Left ventricle myocardium superior (tissue), 1 donor: ENCODE measurements at regions of chr18 and their contacts with region 1.

Region 1: GRCh38 chr18:75884728-75885127 is 457.2 kb upstream of the SMIM21 start:
- DNase-seq: peak; percentile 36
- ATAC-seq: no peak

Region 2: GRCh38 chr18:75478996-75479880 is 405.5 kb before region 1 on chr18:
- intact Hi-C with region 1: no loop called
- DNase-seq: no peak
- ATAC-seq: peak; percentile 75

Region 3: DNA sequence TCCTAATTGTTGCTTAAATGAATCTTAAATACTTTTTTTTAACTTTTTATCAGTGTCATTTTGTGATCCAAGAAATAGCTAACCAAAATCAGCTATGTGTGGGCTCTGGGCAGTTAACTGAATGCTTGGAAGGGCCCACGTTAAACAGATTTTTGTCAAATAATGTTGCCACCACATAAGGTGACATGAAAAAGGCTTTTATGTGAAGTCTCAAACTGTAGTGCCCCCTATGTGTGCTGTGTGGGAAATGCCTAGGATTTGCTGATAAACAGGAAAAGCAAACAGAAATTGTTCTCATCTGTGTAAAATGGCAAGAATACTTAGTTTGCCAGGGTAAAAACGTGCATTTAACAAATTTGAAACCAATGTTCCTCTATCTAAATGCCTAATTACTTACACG is 368.2 kb after region 1 on chr18:
- intact Hi-C with region 1: loop called (anchors 10 kb)
- DNase-seq: no peak
- ATAC-seq: no peak

Region 4: DNA sequence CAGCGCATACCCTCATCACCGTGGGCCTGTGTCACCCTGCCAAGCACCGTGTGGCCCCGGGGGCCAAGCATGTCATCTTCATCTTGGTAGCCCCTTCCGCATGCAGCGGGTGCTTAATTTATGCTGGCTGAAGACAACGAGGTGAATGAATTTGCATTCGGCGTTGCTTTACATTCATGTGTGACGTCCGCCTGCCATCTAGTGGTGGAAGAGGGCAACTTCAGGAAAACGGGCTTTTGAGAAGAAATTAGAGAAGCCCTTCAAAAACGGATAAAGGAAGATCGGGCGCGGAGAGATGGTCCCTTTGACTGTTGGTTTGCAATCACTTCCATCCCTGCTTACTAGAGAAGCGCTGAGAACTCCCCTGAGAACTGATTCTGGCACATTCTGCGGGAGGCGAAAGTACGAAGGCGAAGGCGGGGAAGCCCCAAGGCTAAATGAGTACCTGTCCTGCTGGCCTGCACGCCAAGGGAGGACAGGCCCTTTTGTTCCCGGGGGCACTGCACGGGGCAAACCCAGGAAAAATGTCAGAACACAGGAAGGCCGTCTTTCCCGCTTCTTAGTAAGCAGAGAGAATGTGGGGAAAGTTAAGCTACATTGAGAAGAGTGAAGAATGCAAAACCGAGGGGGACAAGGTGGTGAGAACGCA is 464.5 kb after region 1 on chr18:
- intact Hi-C with region 1: loop called (anchors 10 kb)
- DNase-seq: peak; percentile 59
- ATAC-seq: peak; percentile 25